ENCODE measurements at regions of chr15 and their contacts with region 1.

Region 1: GRCh38 chr15:90320061-90320884 is 31.8 kb upstream of the ZNF774 start:
- DNase-seq: peak; percentile 80
- ATAC-seq: peak; percentile 99
- H3K4me3 Mint-ChIP-seq: peak overlapping the region; percentile 9
- H3K27ac Mint-ChIP-seq: no peak overlapping the region
- H3K4me1 Mint-ChIP-seq: peaks cover 7% of the 10 kb centered on the region
- H3K27me3 Mint-ChIP-seq: peaks cover 2% of the 10 kb centered on the region

Region 2: DNA sequence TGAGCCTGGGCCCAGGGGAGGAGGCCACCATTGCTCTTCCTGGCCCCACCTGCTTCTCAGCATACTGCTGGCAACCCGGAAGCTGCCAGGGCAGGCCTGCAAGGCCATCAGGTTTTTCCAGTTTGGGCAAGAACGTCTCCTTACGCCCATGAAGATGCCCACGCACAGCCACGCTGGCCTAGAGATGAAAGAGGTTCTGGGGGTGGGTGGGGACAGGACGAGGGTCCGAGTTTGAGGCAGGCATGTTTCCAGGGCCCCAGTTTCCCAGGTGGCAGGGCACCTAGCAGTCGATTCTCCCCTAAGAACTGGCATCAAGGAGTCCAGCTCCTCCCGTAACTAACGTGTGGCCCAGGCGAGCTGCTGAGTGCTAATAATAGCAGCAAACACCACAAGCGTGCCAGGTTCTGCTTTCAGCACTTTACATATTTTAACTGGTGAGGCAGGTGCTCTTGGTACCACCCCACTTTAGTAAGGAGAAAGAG is 273.3 kb before region 1 on chr15:
- CTCF ChIA-PET with region 1: no interaction called
- POLR2A ChIA-PET with region 1: no interaction called
- DNase-seq: no peak
- ATAC-seq: no peak
- H3K4me3 Mint-ChIP-seq: no peak overlapping the region
- H3K27ac Mint-ChIP-seq: peak overlapping the region; percentile 23
- H3K4me1 Mint-ChIP-seq: peaks cover 7% of the 10 kb centered on the region
- H3K27me3 Mint-ChIP-seq: no peaks in the 10 kb centered on the region

Region 3: DNA sequence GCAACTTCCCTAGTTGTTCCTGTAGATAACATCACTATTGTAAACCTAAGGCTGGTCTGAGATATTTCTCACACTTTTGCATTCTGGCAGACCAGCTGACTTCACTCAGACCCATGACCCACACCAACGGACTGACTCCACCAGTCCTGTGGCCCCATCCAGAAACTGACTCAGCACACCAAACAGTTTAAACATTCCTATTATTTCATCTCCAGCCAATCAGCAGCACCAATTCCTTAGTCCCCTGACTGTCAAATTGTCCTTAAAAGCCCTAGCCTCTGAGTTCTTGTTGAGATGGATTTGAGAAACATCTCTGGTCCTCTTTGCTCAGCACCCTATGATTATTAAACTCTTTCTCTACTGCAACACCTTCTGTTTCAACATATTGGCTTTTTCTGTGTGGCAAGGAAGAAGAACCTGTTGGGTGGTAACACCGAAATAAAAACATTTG is 205.8 kb before region 1 on chr15:
- CTCF ChIA-PET with region 1: no interaction called
- POLR2A ChIA-PET with region 1: no interaction called
- DNase-seq: no peak
- ATAC-seq: no peak
- H3K4me3 Mint-ChIP-seq: no peak overlapping the region
- H3K27ac Mint-ChIP-seq: no peak overlapping the region
- H3K4me1 Mint-ChIP-seq: no peaks in the 10 kb centered on the region
- H3K27me3 Mint-ChIP-seq: peaks cover 3% of the 10 kb centered on the region

Region 4: DNA sequence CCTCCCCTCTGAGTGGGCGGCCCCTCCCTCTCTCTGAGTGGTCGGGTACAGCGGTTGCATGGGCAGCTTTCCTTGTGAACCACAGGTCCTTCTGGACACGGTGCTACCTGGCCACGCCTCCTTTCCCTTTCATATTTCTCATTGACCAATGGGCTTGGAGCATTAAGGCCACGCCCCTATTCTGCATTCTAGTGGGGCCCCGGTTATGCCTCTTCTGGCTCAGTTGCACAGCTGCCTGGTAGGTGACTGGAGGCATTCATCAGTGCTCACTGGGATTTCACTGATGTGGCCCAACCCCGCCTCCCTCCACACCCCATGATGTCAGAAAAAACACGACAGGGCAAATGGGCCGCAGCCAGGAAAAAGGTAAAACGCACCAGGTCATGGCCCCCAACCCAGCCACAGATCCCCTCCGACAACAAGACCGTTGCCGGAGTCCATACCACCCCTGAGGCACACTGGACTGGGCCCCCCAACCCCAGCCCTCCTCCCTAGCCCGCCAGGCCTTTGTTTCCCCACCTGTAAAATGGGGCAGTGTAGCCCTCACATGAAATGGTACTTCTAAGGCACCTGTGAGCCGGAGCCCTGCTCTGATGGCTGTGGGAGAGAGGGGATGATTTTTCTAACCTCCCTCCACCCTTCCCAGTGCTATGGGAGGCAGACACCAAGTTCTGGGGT is 28.5 kb before region 1 on chr15:
- CTCF ChIA-PET with region 1: interaction called, 29 read pairs
- POLR2A ChIA-PET with region 1: no interaction called
- DNase-seq: peak; percentile 38
- ATAC-seq: no peak
- H3K4me3 Mint-ChIP-seq: no peak overlapping the region
- H3K27ac Mint-ChIP-seq: no peak overlapping the region
- H3K4me1 Mint-ChIP-seq: peaks cover 16% of the 10 kb centered on the region
- H3K27me3 Mint-ChIP-seq: peaks cover 6% of the 10 kb centered on the region

Region 5: DNA sequence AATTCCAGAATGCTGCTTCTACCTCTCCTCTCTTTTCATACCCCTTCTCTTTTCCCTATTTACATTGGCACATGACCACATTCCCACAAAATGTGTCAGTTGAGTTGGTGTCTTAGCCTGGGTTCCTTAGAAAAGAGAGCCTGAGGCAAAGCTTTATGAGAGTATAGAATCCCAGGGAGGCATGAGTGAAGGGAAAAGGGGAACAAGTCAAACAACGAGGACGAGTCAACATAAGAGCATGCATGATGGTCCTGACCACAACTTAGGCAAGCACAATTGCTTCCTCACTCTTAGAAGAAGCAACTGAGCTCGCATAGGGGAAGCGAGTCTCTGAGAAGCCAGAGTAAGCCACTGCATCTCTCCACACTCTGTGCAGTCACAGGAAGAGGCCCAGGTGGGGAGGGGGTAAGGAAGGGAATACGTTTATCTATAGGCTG is 16.4 kb after region 1 on chr15:
- CTCF ChIA-PET with region 1: interaction called, 32 read pairs
- POLR2A ChIA-PET with region 1: no interaction called
- DNase-seq: peak; percentile 47
- ATAC-seq: peak; percentile 76
- H3K4me3 Mint-ChIP-seq: no peak overlapping the region
- H3K27ac Mint-ChIP-seq: peak overlapping the region; percentile 70
- H3K4me1 Mint-ChIP-seq: peaks cover 10% of the 10 kb centered on the region
- H3K27me3 Mint-ChIP-seq: no peaks in the 10 kb centered on the region

Region 6: GRCh38 chr15:90400406-90401314 is 80.4 kb after region 1 on chr15:
- CTCF ChIA-PET with region 1: interaction called, 16 read pairs
- POLR2A ChIA-PET with region 1: no interaction called
- DNase-seq: peak; percentile 84
- ATAC-seq: peak; percentile 96
- H3K4me3 Mint-ChIP-seq: peak overlapping the region; percentile 68
- H3K27ac Mint-ChIP-seq: peak overlapping the region; percentile 93
- H3K4me1 Mint-ChIP-seq: peaks cover 60% of the 10 kb centered on the region
- H3K27me3 Mint-ChIP-seq: no peaks in the 10 kb centered on the region

Region 7: GRCh38 chr15:90436952-90437351 is 116.7 kb after region 1 on chr15:
- CTCF ChIA-PET with region 1: interaction called, 10 read pairs
- POLR2A ChIA-PET with region 1: no interaction called
- DNase-seq: no peak
- ATAC-seq: peak; percentile 30
- H3K4me3 Mint-ChIP-seq: no peak overlapping the region
- H3K27ac Mint-ChIP-seq: no peak overlapping the region
- H3K4me1 Mint-ChIP-seq: peaks cover 13% of the 10 kb centered on the region
- H3K27me3 Mint-ChIP-seq: no peaks in the 10 kb centered on the region

Region 8: GRCh38 chr15:90482124-90483011 is 162.1 kb after region 1 on chr15:
- CTCF ChIA-PET with region 1: interaction called, 131 read pairs
- POLR2A ChIA-PET with region 1: no interaction called
- DNase-seq: peak; percentile 59
- ATAC-seq: no peak
- H3K4me3 Mint-ChIP-seq: no peak overlapping the region
- H3K27ac Mint-ChIP-seq: peak overlapping the region; percentile 22
- H3K4me1 Mint-ChIP-seq: peaks cover 38% of the 10 kb centered on the region
- H3K27me3 Mint-ChIP-seq: no peaks in the 10 kb centered on the region

Region 9: GRCh38 chr15:90886041-90886614 is 565.9 kb after region 1 on chr15:
- CTCF ChIA-PET with region 1: interaction called, 14 read pairs
- POLR2A ChIA-PET with region 1: no interaction called
- DNase-seq: peak; percentile 86
- ATAC-seq: peak; percentile 76
- H3K4me3 Mint-ChIP-seq: peak overlapping the region; percentile 52
- H3K27ac Mint-ChIP-seq: peak overlapping the region; percentile 79
- H3K4me1 Mint-ChIP-seq: peaks cover 42% of the 10 kb centered on the region
- H3K27me3 Mint-ChIP-seq: no peaks in the 10 kb centered on the region

Measured in activated CD8-positive, alpha-beta T cell treated with anti-CD3 and anti-CD28 coated beads, Interleukin-2, amount 10 ng/mL, durations not matched to agents 7 days and 5 days (primary cell).